Activated CD8-positive, alpha-beta T cell treated with anti-CD3 and anti-CD28 coated beads, Interleukin-2, amount 10 ng/mL, durations not matched to agents 7 days and 5 days (primary cell): ENCODE measurements at regions of chr1 and their contacts with region 1.

Region 1: GRCh38 chr1:9717193-9718005 is 65.9 kb downstream of the PIK3CD start:
- DNase-seq: peak; percentile 98
- ATAC-seq: peak; percentile 73
- H3K4me3 Mint-ChIP-seq: peak overlapping the region; percentile 96
- H3K27ac Mint-ChIP-seq: peak overlapping the region; percentile 96
- H3K4me1 Mint-ChIP-seq: peaks cover 76% of the 10 kb centered on the region
- H3K27me3 Mint-ChIP-seq: no peaks in the 10 kb centered on the region

Region 2: DNA sequence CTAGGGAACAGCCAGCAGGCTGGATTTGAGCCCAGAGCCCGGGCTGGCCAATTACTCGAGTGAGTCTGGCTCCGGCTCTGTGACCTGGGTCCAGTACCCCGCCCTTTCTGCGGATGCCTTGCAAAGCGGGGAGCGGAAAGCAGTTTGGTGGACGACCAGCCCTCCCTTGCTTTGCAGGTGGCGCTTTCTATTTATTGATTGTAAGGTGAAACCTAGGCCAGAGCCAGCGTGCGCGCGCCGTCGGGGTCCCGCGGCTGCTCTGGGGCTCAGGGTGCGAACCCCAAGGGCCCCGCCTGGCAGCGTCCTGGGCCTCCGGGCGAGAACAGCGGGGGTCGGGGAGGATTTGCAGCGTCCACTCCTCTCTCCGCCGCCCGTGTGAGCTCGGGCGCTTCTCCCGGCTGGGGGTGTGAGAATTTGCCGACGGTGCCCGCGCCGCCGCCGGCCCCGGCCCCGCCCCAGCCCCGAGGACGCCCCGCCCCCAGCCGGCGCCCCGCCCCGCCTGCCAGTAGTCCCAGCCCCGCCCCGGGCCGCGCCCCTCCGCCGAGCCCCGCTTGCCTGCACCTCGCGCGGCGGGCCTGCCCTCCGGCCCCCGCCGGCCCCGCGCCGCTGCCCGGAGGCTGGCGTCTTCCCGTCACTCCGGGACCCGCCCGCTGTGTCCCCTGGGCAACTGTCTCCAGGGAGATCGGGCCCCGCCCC is 28.2 kb before region 1 on chr1:
- CTCF ChIA-PET with region 1: interaction called, 46 read pairs
- POLR2A ChIA-PET with region 1: interaction called, 20 read pairs
- DNase-seq: peak; percentile 87
- ATAC-seq: peak; percentile 79
- H3K4me3 Mint-ChIP-seq: peak overlapping the region; percentile 78
- H3K27ac Mint-ChIP-seq: peak overlapping the region; percentile 76
- H3K4me1 Mint-ChIP-seq: peaks cover 73% of the 10 kb centered on the region
- H3K27me3 Mint-ChIP-seq: no peaks in the 10 kb centered on the region

Region 3: DNA sequence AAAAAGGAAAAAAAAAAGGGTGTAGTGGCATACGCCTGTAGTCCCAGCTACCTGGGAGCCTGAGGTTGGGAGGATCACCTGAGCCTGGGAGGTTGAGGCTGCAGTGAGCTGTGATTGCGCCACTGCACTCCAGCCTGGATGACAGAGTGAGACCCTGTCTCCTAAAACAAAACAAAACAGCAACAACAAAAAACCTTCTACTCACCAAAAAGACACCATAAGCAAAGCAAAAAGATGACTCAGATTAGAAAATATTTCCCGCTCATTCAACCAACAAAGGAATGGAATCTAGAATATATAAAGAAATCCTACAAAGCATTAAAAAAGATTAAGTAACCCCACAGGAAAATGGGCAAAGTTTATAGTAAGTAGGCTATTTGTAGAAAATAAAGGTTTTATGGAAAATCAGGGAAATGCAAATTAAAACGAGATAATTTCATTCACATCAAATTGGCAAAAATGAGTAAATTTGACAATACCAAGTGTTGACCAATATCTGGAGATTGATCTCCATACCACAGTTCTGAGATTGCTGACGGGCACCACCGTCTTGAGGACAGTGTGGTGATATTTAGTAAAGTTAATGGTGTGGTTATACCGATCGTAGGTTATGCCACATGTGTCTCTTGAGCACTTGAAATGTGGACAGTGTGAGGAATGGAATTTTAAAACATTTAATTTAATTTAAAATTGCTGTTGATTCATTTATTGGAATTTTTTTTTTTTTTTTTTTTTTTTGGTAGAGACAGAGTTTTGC is 11.9 kb before region 1 on chr1:
- CTCF ChIA-PET with region 1: interaction called, 13 read pairs
- POLR2A ChIA-PET with region 1: interaction called, 23 read pairs
- DNase-seq: no peak
- ATAC-seq: no peak
- H3K4me3 Mint-ChIP-seq: no peak overlapping the region
- H3K27ac Mint-ChIP-seq: peak overlapping the region; percentile 80
- H3K4me1 Mint-ChIP-seq: peaks cover 78% of the 10 kb centered on the region
- H3K27me3 Mint-ChIP-seq: no peaks in the 10 kb centered on the region